Dorsolateral prefrontal cortex (tissue), 120 donors: ENCODE measurements at regions of chr12 and their contacts with region 1.

Region 1: DNA sequence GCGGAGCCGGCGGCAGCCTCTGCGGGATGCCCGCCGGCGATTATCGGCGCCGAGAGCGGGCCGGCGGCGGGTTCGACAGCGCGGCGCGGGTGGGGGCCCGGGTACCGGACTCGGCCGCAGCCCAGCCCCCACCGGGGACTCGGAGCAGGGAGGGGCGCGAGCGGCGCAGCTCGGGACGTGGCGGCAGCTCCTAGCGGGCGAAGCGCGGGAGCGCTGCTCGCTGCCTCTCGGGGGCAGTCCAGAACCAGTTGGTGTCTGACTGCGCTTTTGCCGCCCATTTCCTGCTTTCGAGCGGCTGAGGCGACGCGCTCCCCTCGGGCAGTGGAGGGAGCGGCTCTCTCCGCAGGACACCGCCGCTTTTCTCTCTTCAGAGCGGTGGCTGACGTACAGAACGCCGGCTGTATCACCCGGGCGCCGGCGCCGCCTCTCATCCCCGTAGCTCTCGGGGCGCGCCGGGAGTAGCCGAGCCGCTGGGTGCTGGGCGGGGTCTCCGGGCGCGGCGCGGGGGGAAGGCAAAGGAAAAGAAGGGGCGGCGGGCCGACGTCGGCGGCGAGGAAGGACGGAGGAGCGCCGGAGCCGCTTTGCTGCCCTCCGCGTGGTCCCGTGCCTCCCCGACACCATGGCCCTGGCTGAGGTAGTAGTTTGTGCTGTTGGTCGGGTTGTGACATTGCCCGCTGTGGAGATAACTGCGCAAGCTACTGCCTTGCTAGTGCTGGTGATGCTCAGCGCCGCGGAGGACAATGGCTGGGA is 136.6 kb downstream of the MON2 start:
- DNase-seq: peak; percentile 73 to 93 (median 88)
- H3K4me3 ChIP-seq: peak overlapping the region; percentile 59 to 94 (median 83)
- H3K27ac ChIP-seq: peak overlapping the region; percentile 97 to 100 (median 100)
- H3K27me3 ChIP-seq: no peaks in the 10 kb centered on the region
- CTCF ChIP-seq: peak in 54 of 56 donors; percentile 29 to 75 (median 61)

Region 2: DNA sequence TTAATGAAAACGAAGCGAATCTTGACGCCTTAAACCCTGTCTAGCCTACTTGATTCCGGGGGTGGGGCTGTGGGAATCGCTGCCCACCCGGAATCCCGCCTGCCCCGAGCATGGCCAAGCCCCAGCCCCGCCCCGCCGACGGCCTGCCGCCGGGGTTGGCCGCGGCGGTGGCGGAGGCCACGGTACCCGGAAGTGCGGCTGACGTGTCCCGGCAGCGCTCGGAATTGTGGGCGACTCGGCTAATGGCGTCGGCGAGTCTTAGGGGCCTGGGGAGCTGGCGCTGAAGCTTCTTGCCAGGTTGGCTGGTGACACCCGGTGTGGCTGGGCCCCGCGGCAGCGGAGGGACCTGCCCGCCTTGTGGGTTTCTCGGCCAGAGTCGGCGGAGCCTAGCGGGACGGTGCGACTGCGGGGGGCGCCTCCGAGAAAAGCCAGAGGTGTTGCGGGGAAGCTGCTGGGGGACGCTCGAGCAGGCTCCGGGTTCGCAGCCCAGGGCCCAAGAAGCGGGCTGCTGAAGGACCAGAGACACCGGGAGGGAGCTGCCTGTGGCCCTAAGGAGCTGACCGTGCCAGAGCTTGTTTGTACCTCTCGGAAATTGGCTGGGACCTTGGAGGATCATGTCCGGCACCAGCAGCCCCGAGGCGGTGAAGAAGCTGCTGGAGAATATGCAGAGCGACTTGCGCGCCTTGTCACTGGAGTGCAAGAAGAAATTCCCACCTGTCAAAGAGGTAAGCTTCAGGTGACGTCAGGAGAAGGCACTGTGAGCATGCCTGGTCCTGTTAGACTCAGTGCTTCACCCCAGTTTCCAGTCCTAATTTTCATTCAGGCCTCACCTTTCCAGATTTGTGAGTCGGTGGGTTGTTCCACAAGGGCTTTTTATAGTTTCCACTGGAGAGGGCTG is 136.4 kb before region 1 on chr12 and contains the start of gene MON2:
- intact Hi-C with region 1: loop called (anchors 1 to 2 kb)
- DNase-seq: peak; percentile 72 to 93 (median 86)
- H3K4me3 ChIP-seq: peak within 1 kb of the TSS; percentile 59 to 99 (median 95)
- H3K27ac ChIP-seq: peak within 1 kb of the TSS in 58 of 59 donors; percentile 55 to 96 (median 88)
- H3K27me3 ChIP-seq: no peaks in the 10 kb centered on the region
- CTCF ChIP-seq: peak in 35 of 56 donors; percentile 4 to 59 (median 35)
- total RNA-seq, gene MON2: 59.2 to 136 (median 95.1) TPM

Region 3: DNA sequence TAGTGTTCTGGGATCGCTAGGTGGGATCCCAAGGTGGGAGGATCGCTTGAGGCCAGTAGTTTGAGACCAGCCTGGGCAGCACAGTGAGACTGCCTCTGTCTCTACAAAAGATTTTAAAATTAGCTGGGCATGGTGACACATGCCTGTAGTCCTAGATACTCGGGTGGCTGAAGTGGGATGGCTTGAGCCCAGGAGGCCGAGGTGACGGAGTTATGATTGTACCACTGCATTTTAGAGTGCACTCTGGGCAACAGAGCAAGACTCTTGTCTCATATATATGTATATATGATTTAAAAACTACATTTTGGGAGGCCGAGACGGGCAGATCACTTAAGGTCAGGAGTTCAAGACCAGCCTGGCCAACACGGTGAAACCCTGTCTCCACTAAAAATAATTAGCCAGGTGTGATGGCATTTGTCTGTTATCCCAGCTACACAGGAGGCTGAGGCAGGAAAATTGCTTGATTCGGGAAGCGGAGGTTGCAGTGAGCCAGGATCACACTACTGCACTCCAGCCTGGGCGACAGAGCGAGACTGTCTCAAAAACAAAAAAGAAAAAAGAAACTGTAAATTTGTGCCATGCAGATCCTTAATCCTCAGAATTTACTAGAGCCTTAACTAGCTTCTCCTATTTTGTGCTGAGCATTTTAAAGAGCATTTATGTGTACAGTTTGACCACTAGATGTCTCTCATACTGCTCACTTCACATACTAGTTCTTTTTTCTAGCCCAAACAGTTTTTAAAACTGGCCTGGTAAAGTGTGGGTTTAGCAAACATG is 21.8 kb before region 1 on chr12:
- intact Hi-C with region 1: loop called in 1 of 2 experiments (anchors 2 kb)
- DNase-seq: no peak
- H3K4me3 ChIP-seq: no peak overlapping the region
- H3K27ac ChIP-seq: peak overlapping the region in 35 of 59 donors; percentile 3 to 83 (median 39)
- H3K27me3 ChIP-seq: no peaks in the 10 kb centered on the region
- CTCF ChIP-seq: peak; percentile 39 to 89 (median 76)

Region 4: GRCh38 chr12:62714774-62715721 is 111.8 kb after region 1 on chr12:
- intact Hi-C with region 1: loop called (anchors 2 to 5 kb)
- DNase-seq: peak in 8 of 10 donors; percentile 33 to 63 (median 50)
- H3K4me3 ChIP-seq: peak overlapping the region in 8 of 59 donors; percentile 2 to 39 (median 15)
- H3K27ac ChIP-seq: peak overlapping the region in 58 of 59 donors; percentile 5 to 96 (median 76)
- H3K27me3 ChIP-seq: no peaks in the 10 kb centered on the region
- CTCF ChIP-seq: peak in 1 of 56 donors; percentile 11

Region 5: DNA sequence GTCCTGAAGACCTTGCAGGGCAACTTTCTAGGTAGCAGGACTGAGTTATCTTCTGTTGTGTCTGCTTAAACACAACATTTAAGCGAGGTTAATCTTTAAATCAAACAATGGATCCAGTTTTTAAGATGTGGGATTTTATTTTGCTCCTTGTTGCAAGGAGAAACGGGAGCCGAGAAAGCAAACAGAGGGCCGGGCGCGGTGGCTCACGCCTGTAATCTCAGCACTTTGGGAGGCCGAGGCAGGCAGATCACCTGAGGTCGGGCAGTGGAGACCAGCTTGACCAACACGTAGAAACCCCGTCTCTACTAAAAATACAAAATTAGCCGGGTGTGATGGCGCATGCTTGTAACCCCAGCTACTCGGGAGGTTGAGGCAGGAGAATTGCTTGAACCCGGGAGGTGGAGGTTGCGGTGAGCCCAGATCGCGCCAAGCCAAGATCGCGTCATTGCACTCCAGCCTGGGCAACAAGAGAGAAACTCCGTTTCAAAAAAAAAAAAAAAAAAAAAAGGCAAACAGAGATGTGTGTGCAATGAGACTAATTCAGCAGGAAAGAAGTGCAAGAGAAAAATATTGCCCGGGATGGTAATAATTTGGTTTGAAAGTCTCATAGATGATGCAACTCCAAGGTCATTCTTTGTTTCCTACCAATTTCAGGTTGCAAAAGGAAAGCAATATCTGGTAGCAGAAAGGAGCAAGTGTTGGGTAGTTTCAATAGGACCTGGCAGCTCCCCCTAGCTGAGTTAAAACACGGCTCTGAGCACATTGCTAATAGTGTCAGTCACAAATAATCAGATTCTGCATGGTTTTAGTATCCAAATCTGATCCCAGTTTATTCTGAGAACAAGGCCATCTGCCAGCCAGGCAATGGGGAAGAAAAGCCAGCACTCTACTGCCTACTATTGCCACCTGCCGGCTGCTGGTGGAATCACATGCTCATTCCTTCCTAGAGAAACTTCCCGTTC is 190.3 kb after region 1 on chr12:
- intact Hi-C with region 1: loop called (anchors 1 kb)
- DNase-seq: peak; percentile 75 to 94 (median 88)
- H3K4me3 ChIP-seq: peak overlapping the region in 36 of 59 donors; percentile 2 to 46 (median 22)
- H3K27ac ChIP-seq: peak overlapping the region in 58 of 59 donors; percentile 2 to 80 (median 64)
- H3K27me3 ChIP-seq: no peaks in the 10 kb centered on the region
- CTCF ChIP-seq: peak; percentile 96 to 100 (median 99)

Region 6: DNA sequence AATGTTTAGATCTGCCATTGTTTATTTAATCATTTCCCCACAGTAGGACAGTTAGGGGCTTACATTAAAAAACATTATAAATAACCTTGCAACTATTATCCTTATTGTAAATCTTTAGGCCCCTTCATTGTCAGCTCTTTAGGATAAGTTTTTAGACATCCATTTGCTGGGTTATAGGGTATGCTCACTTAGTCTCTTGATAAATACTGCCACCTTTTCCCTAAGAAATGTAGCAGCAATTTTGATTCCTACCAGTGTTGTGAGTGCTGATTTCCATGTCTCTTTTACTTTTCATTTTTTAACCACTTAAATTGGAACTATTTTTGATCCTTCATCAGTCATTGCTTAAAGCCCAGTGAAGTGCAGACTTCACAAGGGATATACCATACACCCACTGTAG is 453.4 kb after region 1 on chr12:
- intact Hi-C with region 1: no loop called
- DNase-seq: no peak
- H3K4me3 ChIP-seq: no peak overlapping the region
- H3K27ac ChIP-seq: no peak overlapping the region
- H3K27me3 ChIP-seq: no peaks in the 10 kb centered on the region
- CTCF ChIP-seq: peak in 1 of 56 donors; percentile 17